ENCODE measurements at regions of chr12 and their contacts with region 1.

Region 1: DNA sequence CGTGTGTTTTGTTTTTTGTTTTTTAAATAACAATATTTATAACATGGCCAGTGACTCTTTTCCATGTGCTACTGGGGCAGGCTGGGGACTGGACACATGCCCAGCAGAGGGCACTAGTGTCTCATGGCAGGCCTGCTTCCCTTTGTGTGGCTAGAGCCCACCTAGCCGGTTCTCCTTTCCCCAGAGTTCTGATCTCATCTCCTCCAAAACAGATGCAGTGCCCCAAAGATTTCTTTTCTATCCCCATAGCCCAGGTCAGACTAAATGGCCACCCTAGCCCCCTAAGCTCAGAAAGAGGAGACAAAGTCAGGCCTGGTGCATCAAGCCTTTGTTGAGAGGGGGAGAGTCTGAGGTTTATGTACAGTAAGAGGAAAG is 21.2 kb downstream of the PRPF40B start:
- DNase-seq: peak; percentile 88
- H3K4me3 Mint-ChIP-seq: no peak overlapping the region
- H3K27ac Mint-ChIP-seq: peak overlapping the region; percentile 53
- H3K4me1 Mint-ChIP-seq: peaks cover 47% of the 10 kb centered on the region
- H3K27me3 Mint-ChIP-seq: no peaks in the 10 kb centered on the region

Region 2: DNA sequence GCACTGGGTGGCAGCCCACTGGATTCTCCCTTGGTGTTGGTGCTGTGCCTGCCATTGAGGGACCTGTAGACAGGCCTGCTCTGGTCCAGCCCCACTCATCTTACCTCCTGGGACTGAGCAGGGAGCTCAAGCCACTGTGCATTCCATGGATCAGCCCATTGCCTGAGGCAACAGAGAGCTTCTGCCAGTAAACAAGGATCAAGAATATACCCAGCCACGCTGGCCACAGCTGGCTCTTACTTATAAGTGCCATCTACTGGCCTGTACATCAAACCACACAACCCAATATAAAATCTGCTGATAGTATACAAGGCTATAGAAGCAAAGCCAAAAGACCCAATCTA is 34.9 kb before region 1 on chr12:
- CTCF ChIA-PET with region 1: no interaction called
- DNase-seq: no peak
- H3K4me3 Mint-ChIP-seq: no peak overlapping the region
- H3K27ac Mint-ChIP-seq: no peak overlapping the region
- H3K4me1 Mint-ChIP-seq: peaks cover 5% of the 10 kb centered on the region
- H3K27me3 Mint-ChIP-seq: peaks cover 19% of the 10 kb centered on the region

Region 3: GRCh38 chr12:49631336-49631907 is 13.2 kb before region 1 on chr12:
- CTCF ChIA-PET with region 1: interaction called, 29 read pairs
- DNase-seq: no peak
- H3K4me3 Mint-ChIP-seq: no peak overlapping the region
- H3K27ac Mint-ChIP-seq: no peak overlapping the region
- H3K4me1 Mint-ChIP-seq: no peaks in the 10 kb centered on the region
- H3K27me3 Mint-ChIP-seq: no peaks in the 10 kb centered on the region

Region 4: DNA sequence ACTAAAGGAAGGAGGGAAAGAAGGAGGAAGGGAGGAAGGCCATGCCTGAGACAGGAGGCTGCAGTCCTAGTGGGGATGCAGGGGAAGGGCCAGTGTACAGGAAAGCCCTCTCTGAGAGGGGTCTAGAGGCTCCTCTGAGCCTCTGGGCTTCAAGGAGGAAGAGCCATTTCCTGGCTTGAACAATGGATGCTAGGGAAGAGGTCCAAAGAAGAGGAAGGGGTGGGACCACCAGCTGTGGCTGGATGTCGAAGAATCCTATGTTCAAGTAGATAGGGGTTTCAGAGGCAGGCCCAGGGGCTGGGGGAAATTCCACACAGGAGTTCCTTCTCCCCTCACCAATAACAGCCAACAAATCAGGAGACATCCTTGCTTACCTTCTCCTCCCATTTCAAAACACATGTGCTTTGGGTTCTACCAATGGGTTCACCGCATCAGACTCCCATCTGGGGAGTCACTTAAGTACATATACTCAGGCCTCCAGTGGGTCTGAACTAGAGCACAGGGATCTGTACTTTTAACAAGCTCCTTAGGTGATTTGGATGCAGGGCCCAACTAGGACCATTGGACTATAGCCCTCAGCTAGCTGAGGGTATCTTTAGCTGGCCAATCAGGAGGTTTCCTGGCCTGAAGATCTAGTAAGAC is 11.1 kb after region 1 on chr12:
- CTCF ChIA-PET with region 1: interaction called, 13 read pairs
- DNase-seq: no peak
- H3K4me3 Mint-ChIP-seq: no peak overlapping the region
- H3K27ac Mint-ChIP-seq: peak overlapping the region; percentile 3
- H3K4me1 Mint-ChIP-seq: peaks cover 28% of the 10 kb centered on the region
- H3K27me3 Mint-ChIP-seq: no peaks in the 10 kb centered on the region

Region 5: DNA sequence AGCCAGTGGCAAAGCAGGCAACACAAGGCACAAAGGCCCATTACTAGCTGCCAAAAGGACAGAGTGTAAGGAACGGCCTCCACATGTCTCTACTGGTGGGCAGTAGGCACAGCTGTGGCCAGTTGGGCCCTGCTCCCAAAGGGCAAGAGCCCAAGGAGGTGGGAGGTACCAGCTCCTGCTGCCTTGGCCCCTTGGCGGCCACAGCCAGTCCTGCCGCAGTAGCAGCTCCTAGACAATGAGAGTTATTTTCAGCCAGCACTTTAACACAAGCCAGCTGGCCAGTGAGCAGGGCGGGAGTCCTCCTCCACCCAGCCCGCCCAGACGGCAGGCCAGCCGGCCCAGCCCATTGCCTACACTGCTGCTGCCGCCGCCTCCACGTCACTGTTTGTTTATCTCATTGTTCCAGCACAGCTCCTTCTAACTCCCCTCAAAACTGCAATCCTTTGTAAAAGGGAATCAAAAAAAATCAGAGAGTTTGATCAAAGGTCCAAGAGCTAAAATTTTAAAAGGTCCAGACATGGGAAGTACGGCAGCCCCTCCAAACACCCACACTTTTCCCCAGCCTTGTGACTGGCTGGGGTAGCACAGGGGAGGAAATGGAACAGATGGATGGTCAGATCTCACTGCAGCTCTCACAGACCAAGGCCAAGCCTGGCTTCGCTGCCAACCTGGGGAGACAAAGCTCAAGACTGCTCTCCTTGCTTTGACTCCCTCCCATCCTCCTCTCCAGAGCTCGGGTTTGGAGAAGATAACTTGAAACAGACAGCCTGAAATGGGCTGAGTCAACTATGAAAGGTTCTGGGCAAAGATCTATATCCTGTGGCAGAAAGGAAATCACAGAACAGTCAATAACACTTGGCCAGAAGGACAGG is 29.1 kb after region 1 on chr12:
- CTCF ChIA-PET with region 1: interaction called, 29 read pairs
- DNase-seq: no peak
- H3K4me3 Mint-ChIP-seq: no peak overlapping the region
- H3K27ac Mint-ChIP-seq: peak overlapping the region; percentile 68
- H3K4me1 Mint-ChIP-seq: peaks cover 75% of the 10 kb centered on the region
- H3K27me3 Mint-ChIP-seq: no peaks in the 10 kb centered on the region

Region 6: GRCh38 chr12:49707128-49707811 is 62.7 kb after region 1 on chr12 and contains the start of gene FMNL3:
- CTCF ChIA-PET with region 1: interaction called, 370 read pairs
- DNase-seq: peak; percentile 98
- H3K4me3 Mint-ChIP-seq: peak within 1 kb of the TSS; percentile 92
- H3K27ac Mint-ChIP-seq: peak within 1 kb of the TSS; percentile 66
- H3K4me1 Mint-ChIP-seq: peaks cover 43% of the 10 kb centered on the region
- H3K27me3 Mint-ChIP-seq: peaks cover 44% of the 10 kb centered on the region

Region 7: GRCh38 chr12:49740930-49741881 is 96.6 kb after region 1 on chr12 and contains the start of gene TMBIM6:
- CTCF ChIA-PET with region 1: interaction called, 15 read pairs
- DNase-seq: peak; percentile 99
- H3K4me3 Mint-ChIP-seq: peak within 1 kb of the TSS; percentile 80
- H3K27ac Mint-ChIP-seq: peak within 1 kb of the TSS; percentile 97
- H3K4me1 Mint-ChIP-seq: peaks cover 40% of the 10 kb centered on the region
- H3K27me3 Mint-ChIP-seq: peaks cover 4% of the 10 kb centered on the region